Pancreas (tissue), 10 donors: ENCODE measurements at regions of chr20 and their contacts with region 1.

Region 1: GRCh38 chr20:19995220-19995863 is 21.8 kb upstream of the NAA20 start:
- DNase-seq: no peak
- ATAC-seq: peak in 3 of 4 donors; percentile 35 to 59 (median 42)
- H3K4me3 ChIP-seq: no peak overlapping the region
- H3K27ac ChIP-seq: no peak overlapping the region
- H3K4me1 ChIP-seq: peaks cover 39 to 55% (median 47%) of the 10 kb centered on the region in 3 donors
- H3K27me3 ChIP-seq: no peaks in the 10 kb centered on the region
- CTCF ChIP-seq: peak; percentile 50 to 70 (median 66)

Region 2: GRCh38 chr20:19784511-19785172 is 210.7 kb before region 1 on chr20:
- intact Hi-C with region 1: loop called (anchors 5 to 10 kb)
- DNase-seq: peak in 3 of 6 donors; percentile 22 to 52 (median 50)
- ATAC-seq: peak; percentile 94 to 96 (median 94)
- H3K4me3 ChIP-seq: no peak overlapping the region
- H3K27ac ChIP-seq: no peak overlapping the region
- H3K4me1 ChIP-seq: peaks cover 0 to 8% (median 4%) of the 10 kb centered on the region in 3 donors
- H3K27me3 ChIP-seq: no peaks in the 10 kb centered on the region
- CTCF ChIP-seq: peak; percentile 46 to 67 (median 54)

Region 3: DNA sequence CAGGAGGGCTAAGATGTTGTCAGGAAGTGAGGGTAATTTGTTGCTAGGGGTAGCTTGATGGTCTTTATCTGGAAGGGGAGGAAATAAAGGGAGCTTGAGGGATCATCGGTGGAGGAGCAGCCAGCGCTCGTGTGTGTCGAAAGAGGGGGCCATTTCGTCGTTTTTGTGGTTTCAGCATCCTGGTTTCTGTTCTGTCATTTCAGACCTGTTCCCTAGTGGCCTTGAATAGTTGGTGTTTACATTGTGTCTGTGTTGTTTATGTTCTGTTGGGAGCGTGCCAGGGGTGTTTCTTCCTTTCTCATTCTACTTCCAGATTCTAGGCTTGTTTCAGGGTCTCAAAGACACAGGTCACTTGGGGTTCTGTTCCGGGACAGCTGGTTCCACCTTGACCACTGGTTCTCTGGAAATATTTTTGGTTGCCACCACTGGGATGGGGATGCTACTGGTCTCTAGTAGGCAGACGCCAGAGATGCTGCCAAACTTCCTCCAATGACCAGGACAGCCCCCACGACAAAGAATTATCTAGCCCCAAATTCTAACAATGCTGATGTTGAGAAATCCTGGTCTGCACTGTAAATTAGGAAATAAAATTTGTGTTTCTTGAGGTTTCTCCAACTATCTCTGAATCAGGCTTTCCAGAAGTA is 92.1 kb before region 1 on chr20:
- intact Hi-C with region 1: loop called in 1 of 3 experiments (anchors 10 kb)
- DNase-seq: peak in 2 of 6 donors; percentile 16 to 38
- ATAC-seq: peak in 3 of 4 donors; percentile 72 to 88 (median 88)
- H3K4me3 ChIP-seq: no peak overlapping the region
- H3K27ac ChIP-seq: no peak overlapping the region
- H3K4me1 ChIP-seq: no peaks in the 10 kb centered on the region
- H3K27me3 ChIP-seq: no peaks in the 10 kb centered on the region
- CTCF ChIP-seq: no peak